ENCODE measurements at regions of chr9 and their contacts with region 1.

Region 1: GRCh38 chr9:124126571-124127289 is 115.2 kb downstream of the LHX2 start:
- DNase-seq: peak; percentile 54 to 84 (median 76)
- ATAC-seq: peak; percentile 56
- H3K4me3 ChIP-seq: no peak overlapping the region
- H3K4me3 Mint-ChIP-seq: no peak overlapping the region
- H3K27ac ChIP-seq: no peak overlapping the region
- H3K27ac Mint-ChIP-seq: no peak overlapping the region
- H3K4me1 ChIP-seq: no peaks in the 10 kb centered on the region
- H3K4me1 Mint-ChIP-seq: peaks cover 4% of the 10 kb centered on the region
- H3K27me3 ChIP-seq: no peaks in the 10 kb centered on the region
- H3K27me3 Mint-ChIP-seq: peaks cover 8% of the 10 kb centered on the region
- CTCF ChIP-seq: peak; percentile 98

Region 2: DNA sequence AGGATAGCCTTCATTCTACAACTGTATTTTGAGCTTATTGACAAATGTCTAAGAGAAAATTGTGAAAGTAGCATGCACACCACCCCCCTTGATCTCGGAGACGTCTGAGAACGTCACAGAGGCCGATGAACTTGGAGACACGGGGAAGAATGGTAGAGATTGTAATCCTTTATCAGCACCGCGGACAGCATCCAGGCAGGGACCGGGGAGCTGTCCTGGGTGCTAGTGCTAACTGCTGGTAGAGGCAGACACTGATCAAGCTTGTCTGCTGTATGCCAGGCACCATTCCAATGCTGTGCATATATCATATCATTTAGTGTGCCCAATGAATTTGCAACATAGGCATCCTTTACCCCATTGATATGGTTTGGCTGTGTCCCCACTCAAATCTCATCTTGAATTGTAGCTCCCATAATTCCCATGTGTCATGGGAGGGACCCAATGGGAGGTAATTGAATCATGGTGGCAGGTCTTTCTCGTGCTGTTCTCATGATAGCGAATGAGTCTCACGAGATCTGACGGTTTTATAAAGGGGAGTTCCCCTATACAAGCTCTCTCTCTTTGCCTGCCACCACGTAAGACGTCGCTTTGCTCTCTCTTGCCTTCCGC is 16.3 kb before region 1 on chr9:
- CTCF ChIA-PET with region 1: interaction called, 13 read pairs
- POLR2A ChIA-PET with region 1: no interaction called
- intact Hi-C with region 1: no loop called
- DNase-seq: peak in 5 of 9 experiments; percentile 14 to 43 (median 35)
- ATAC-seq: peak; percentile 42
- H3K4me3 ChIP-seq: no peak overlapping the region
- H3K4me3 Mint-ChIP-seq: no peak overlapping the region
- H3K27ac ChIP-seq: no peak overlapping the region
- H3K27ac Mint-ChIP-seq: no peak overlapping the region
- H3K4me1 ChIP-seq: no peaks in the 10 kb centered on the region
- H3K4me1 Mint-ChIP-seq: no peaks in the 10 kb centered on the region
- H3K27me3 ChIP-seq: peaks cover 2 to 6% of the 10 kb centered on the region in 2 experiments
- H3K27me3 Mint-ChIP-seq: peaks cover 34% of the 10 kb centered on the region
- CTCF ChIP-seq: no peak

Region 3: GRCh38 chr9:124222918-124223720 is 96.4 kb after region 1 on chr9:
- CTCF ChIA-PET with region 1: no interaction called
- POLR2A ChIA-PET with region 1: no interaction called
- intact Hi-C with region 1: no loop called
- DNase-seq: no peak
- ATAC-seq: no peak
- H3K4me3 ChIP-seq: no peak overlapping the region
- H3K4me3 Mint-ChIP-seq: no peak overlapping the region
- H3K27ac ChIP-seq: no peak overlapping the region
- H3K27ac Mint-ChIP-seq: no peak overlapping the region
- H3K4me1 ChIP-seq: peaks cover 7% of the 10 kb centered on the region
- H3K4me1 Mint-ChIP-seq: peaks cover 13% of the 10 kb centered on the region
- H3K27me3 ChIP-seq: no peaks in the 10 kb centered on the region
- H3K27me3 Mint-ChIP-seq: no peaks in the 10 kb centered on the region
- CTCF ChIP-seq: no peak

Region 4: GRCh38 chr9:124291801-124292396 is 165.2 kb after region 1 on chr9:
- CTCF ChIA-PET with region 1: interaction called, 20 read pairs
- POLR2A ChIA-PET with region 1: no interaction called
- intact Hi-C with region 1: loop called in 1 of 2 experiments (anchors 1 kb)
- DNase-seq: peak in 3 of 9 experiments; percentile 28 to 57 (median 30)
- ATAC-seq: no peak
- H3K4me3 ChIP-seq: no peak overlapping the region
- H3K4me3 Mint-ChIP-seq: no peak overlapping the region
- H3K27ac ChIP-seq: no peak overlapping the region
- H3K27ac Mint-ChIP-seq: no peak overlapping the region
- H3K4me1 ChIP-seq: no peaks in the 10 kb centered on the region
- H3K4me1 Mint-ChIP-seq: peaks cover 4% of the 10 kb centered on the region
- H3K27me3 ChIP-seq: no peaks in the 10 kb centered on the region
- H3K27me3 Mint-ChIP-seq: peaks cover 4% of the 10 kb centered on the region
- CTCF ChIP-seq: no peak

Region 5: DNA sequence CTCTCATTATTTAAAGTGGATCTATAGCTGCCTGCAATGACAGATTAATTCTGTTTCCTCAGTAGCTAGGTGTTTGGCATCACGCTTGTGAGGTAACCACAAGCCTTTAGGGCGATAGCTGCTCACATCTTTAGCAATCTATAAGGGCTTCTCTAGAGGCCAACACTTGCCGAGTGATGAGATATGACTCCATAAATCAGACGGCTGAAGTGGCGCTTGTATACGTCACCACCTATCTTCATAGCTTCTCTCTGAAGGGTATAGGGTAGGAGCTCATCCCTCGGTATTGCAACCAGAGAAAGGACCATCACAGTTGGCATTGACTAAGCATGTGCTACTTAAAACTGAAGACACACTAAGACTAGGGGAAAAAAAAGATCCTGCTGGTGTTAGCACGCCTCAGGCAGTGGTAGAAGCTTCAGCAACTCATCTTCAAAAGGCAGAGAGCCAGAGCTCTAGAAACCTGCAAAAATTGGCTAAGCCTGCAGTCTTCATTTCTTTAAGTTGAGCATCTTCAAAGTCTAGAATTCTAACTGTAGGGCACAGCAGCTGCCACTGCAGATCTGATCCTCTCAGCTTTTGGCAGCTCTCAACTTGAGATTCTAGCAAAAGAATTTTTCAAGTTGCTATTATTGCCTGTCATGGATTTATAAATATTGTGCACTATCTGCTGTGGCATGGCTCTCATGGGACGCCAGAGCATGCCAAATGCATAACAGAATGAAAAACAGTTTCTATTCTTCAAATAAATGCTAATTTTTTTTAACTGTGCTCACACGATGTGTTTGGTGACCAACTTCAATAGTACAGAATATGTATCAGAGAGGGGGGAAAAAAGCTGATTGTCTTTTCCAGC is 251.0 kb after region 1 on chr9:
- CTCF ChIA-PET with region 1: no interaction called
- POLR2A ChIA-PET with region 1: no interaction called
- intact Hi-C with region 1: loop called in 1 of 2 experiments (anchors 5 kb)
- DNase-seq: no peak
- ATAC-seq: no peak
- H3K4me3 ChIP-seq: no peak overlapping the region
- H3K4me3 Mint-ChIP-seq: no peak overlapping the region
- H3K27ac ChIP-seq: no peak overlapping the region
- H3K27ac Mint-ChIP-seq: no peak overlapping the region
- H3K4me1 ChIP-seq: no peaks in the 10 kb centered on the region
- H3K4me1 Mint-ChIP-seq: peaks cover 17% of the 10 kb centered on the region
- H3K27me3 ChIP-seq: no peaks in the 10 kb centered on the region
- H3K27me3 Mint-ChIP-seq: no peaks in the 10 kb centered on the region
- CTCF ChIP-seq: no peak

Region 6: DNA sequence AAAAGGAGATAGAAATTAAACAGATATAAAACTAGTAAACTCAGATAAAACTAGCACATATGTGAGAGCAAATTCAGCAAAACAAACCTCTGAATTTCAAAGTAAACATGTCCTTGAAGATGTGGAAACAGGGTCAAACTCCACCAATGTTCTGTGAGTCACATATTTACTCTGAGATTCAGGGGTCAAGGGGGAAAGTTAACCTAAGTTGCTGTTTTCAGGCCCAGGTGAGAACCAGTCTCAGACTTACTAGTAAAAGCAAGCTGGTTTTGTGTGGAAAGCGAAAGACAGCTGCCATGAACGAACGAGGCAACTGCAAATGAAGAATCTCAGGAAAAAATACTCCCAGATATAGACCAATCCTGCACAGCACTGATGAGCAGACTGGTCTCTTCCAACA is 259.5 kb after region 1 on chr9:
- CTCF ChIA-PET with region 1: interaction called, 5 read pairs
- POLR2A ChIA-PET with region 1: no interaction called
- intact Hi-C with region 1: loop called in 1 of 2 experiments (anchors 2 kb)
- DNase-seq: no peak
- ATAC-seq: no peak
- H3K4me3 ChIP-seq: no peak overlapping the region
- H3K4me3 Mint-ChIP-seq: no peak overlapping the region
- H3K27ac ChIP-seq: no peak overlapping the region
- H3K27ac Mint-ChIP-seq: no peak overlapping the region
- H3K4me1 ChIP-seq: peaks cover 10% of the 10 kb centered on the region
- H3K4me1 Mint-ChIP-seq: peaks cover 44% of the 10 kb centered on the region
- H3K27me3 ChIP-seq: no peaks in the 10 kb centered on the region
- H3K27me3 Mint-ChIP-seq: no peaks in the 10 kb centered on the region
- CTCF ChIP-seq: no peak

Region 7: DNA sequence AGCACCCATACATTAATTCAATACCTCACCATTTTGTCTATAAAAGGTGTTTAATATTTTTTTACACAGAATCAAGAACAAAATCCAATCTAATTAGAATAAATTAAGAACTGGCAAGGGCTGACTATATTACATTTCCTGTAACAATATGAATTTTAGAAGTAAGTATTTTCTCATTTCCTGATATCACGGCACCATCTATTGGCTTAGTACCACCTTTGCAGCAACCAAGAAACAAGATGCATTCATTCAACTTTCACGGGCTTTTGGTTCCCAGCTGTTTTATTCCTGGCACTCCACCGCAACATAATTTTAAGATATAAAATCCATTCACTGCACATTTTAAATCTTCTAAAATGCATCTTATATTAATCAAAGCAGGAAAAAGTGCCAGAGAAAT is 267.9 kb after region 1 on chr9:
- CTCF ChIA-PET with region 1: interaction called, 5 read pairs
- POLR2A ChIA-PET with region 1: no interaction called
- intact Hi-C with region 1: loop called in 1 of 2 experiments (anchors 2 kb)
- DNase-seq: no peak
- ATAC-seq: no peak
- H3K4me3 ChIP-seq: no peak overlapping the region
- H3K4me3 Mint-ChIP-seq: no peak overlapping the region
- H3K27ac ChIP-seq: no peak overlapping the region
- H3K27ac Mint-ChIP-seq: no peak overlapping the region
- H3K4me1 ChIP-seq: peaks cover 6% of the 10 kb centered on the region
- H3K4me1 Mint-ChIP-seq: peaks cover 69% of the 10 kb centered on the region
- H3K27me3 ChIP-seq: no peaks in the 10 kb centered on the region
- H3K27me3 Mint-ChIP-seq: no peaks in the 10 kb centered on the region
- CTCF ChIP-seq: no peak

Region 8: GRCh38 chr9:124537926-124538325 is 411.2 kb after region 1 on chr9:
- CTCF ChIA-PET with region 1: interaction called, 10 read pairs
- POLR2A ChIA-PET with region 1: no interaction called
- intact Hi-C with region 1: loop called in 1 of 2 experiments (anchors 1 kb)
- DNase-seq: no peak
- ATAC-seq: no peak
- H3K4me3 ChIP-seq: no peak overlapping the region
- H3K4me3 Mint-ChIP-seq: no peak overlapping the region
- H3K27ac ChIP-seq: no peak overlapping the region
- H3K27ac Mint-ChIP-seq: no peak overlapping the region
- H3K4me1 ChIP-seq: no peaks in the 10 kb centered on the region
- H3K4me1 Mint-ChIP-seq: no peaks in the 10 kb centered on the region
- H3K27me3 ChIP-seq: no peaks in the 10 kb centered on the region
- H3K27me3 Mint-ChIP-seq: peaks cover 3% of the 10 kb centered on the region
- CTCF ChIP-seq: no peak